ENCODE measurements at regions of chr12 and their contacts with region 1.

Region 1: DNA sequence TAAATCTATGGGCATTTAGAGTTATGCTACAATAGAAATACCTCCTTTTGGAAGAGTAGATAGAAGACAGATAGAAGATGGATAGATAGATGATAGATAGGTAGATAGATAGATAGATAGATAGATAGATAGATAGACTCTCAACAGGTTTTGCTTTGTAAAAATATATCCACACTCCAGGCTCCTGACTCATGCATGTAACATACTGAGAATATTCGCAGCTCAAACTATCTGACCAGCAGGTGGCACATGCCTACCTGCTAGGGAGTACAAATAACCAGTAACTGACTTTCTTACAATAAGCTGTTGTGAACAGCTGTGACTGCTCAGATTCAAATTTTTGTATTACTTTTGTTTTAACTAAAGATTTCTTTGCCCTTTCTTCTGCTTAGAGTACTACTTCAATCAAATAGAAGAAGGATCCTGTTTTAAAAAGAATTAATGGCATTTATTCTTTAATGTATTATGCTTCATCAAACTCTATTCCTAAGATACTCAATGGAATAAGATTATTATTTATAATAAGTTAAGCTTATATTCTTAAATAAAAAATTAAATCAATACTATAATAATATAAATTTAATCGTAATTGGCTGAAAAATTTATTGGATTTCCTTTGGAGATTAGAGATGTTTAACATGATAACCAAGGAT is 15.8 kb upstream of the CPNE8 start:
- H3K4me3 ChIP-seq: no peak overlapping the region
- H3K27ac ChIP-seq: no peak overlapping the region
- H3K4me1 ChIP-seq: no peaks in the 10 kb centered on the region
- CTCF ChIP-seq: peak; percentile 46; the same call in 1 of the 2 replicates

Region 2: GRCh38 chr12:38956337-38956736 is 35.2 kb after region 1 on chr12:
- CTCF ChIA-PET with region 1: no interaction called
- POLR2A ChIA-PET with region 1: no interaction called
- H3K4me3 ChIP-seq: no peak overlapping the region
- H3K27ac ChIP-seq: no peak overlapping the region
- H3K4me1 ChIP-seq: no peaks in the 10 kb centered on the region
- CTCF ChIP-seq: no peak

Region 3: DNA sequence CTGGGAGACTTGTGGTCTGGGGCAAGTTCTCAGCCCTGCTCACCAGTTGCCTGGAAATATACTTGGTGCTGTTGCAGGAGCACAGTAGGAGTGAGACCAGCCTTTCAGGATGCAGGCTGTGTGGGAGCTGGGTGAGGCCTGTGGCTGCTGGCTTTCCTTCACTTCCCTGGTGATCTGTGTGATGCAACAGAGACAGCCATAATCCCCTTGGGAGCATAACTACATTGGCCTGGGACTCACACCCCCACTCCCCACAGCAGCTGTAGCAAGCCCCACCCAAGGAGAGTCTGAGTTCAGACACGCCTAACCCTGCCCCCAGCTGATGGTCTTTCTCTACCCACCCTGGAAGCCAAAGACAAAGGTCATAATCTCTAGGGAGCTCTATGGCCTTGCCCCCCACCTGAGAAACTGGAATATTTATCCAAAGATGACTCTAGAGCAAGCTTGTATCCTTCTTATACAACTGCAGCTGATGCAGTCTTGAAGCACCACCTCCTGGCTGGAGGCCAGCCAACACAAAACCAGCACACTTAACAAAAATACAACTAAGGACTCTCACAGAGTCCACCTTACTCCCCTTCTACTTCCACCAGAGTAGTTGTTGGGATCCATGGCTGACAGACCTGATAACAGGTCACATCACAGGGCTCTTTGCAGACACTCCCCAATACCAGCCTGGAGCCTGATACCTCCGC is 174.6 kb after region 1 on chr12:
- CTCF ChIA-PET with region 1: interaction called, 14 read pairs
- POLR2A ChIA-PET with region 1: no interaction called
- H3K4me3 ChIP-seq: no peak overlapping the region
- H3K27ac ChIP-seq: no peak overlapping the region
- H3K4me1 ChIP-seq: no peaks in the 10 kb centered on the region
- CTCF ChIP-seq: peak; percentile 39; the same call in 1 of the 2 replicates

Region 4: GRCh38 chr12:39103552-39104165 is 182.5 kb after region 1 on chr12:
- CTCF ChIA-PET with region 1: interaction called, 97 read pairs
- POLR2A ChIA-PET with region 1: interaction called, 3 read pairs
- H3K4me3 ChIP-seq: no peak overlapping the region
- H3K27ac ChIP-seq: no peak overlapping the region
- H3K4me1 ChIP-seq: no peaks in the 10 kb centered on the region
- CTCF ChIP-seq: peak; percentile 73

Measured in HEK293 (cell line).